Motor neuron (in vitro differentiated cells): ENCODE measurements at regions of chr7 and their contacts with region 1.

Region 1: DNA sequence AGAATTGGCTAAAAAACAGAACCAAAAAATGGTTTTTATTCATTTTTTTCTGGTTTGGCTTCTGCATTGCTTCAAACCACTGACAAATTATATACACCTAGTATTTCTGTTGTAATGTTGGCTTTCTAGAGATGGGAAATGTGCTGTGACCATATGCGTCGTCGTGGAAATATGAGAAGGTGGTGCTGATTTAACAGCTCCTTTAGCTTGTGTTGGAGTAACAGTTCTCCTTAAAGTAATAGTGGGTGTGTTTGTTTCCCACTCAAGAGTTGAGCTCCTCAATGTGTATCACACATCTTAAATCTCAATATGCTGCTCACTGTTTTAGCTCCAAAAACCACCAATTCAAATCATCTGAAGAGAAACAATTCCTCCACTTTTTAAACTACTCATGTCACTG is 196.4 kb downstream of the LHFPL3 start:
- ATAC-seq: no peak
- H3K4me3 ChIP-seq: no peak overlapping the region
- H3K27ac ChIP-seq: no peak overlapping the region
- H3K4me1 ChIP-seq: no peaks in the 10 kb centered on the region

Region 2: DNA sequence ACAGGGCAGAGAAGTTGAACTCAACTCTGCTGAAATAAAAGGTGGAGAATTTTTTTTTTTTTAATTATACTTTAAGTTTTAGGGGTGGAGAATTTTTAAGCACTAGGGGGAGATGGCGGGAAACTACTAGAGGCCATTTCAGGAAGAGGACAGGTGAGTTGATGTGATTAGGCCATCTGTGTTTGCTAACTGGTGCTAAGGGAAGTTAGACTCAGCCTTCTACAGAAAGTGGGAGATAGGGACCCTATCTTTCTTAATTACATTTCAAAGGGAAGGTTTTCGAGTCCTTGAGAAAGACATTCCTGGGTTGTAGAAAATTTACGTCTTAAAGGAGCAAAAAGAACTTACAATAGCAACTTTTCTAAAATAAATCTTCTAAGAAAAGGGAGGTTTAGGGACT is 71.7 kb before region 1 on chr7:
- in situ Hi-C with region 1: no loop called
- ATAC-seq: no peak
- H3K4me3 ChIP-seq: no peak overlapping the region
- H3K27ac ChIP-seq: no peak overlapping the region
- H3K4me1 ChIP-seq: no peaks in the 10 kb centered on the region

Region 3: GRCh38 chr7:104621321-104621720 is 96.5 kb after region 1 on chr7:
- in situ Hi-C with region 1: loop called in 1 of 9 experiments (anchors 25 kb)
- ATAC-seq: peak in 3 of 8 experiments; percentile 27 to 63 (median 42)
- H3K4me3 ChIP-seq: no peak overlapping the region
- H3K27ac ChIP-seq: no peak overlapping the region
- H3K4me1 ChIP-seq: no peaks in the 10 kb centered on the region